ENCODE measurements at regions of chr6 and their contacts with region 1.

Region 1: DNA sequence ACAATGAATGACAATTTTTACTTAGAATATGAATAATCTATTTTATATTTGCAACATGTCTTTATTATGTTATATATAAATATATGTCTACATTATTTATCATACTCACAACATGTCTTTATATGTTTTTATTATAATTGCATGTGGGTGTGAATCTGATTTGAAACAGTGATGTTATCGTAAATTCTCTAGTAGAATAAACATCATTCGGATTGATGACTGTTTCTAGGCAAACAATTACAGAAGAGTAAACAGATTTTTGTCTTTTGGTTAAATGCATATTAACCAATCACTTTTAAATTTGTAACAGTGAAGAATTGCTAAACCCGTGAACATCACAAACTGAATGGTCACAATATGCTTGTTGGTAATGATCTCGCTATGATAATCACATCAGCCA is 814.4 kb downstream of the EYS start:
- DNase-seq: no peak
- ATAC-seq: no peak

Region 2: GRCh38 chr6:64949257-64949656 is 56.7 kb after region 1 on chr6:
- intact Hi-C with region 1: loop called (anchors 2 kb)
- DNase-seq: no peak
- ATAC-seq: no peak

Measured in sciatic nerve (tissue), 2 donors.